Uterus (tissue), 4 donors: ENCODE measurements at regions of chr14 and their contacts with region 1.

Region 1: DNA sequence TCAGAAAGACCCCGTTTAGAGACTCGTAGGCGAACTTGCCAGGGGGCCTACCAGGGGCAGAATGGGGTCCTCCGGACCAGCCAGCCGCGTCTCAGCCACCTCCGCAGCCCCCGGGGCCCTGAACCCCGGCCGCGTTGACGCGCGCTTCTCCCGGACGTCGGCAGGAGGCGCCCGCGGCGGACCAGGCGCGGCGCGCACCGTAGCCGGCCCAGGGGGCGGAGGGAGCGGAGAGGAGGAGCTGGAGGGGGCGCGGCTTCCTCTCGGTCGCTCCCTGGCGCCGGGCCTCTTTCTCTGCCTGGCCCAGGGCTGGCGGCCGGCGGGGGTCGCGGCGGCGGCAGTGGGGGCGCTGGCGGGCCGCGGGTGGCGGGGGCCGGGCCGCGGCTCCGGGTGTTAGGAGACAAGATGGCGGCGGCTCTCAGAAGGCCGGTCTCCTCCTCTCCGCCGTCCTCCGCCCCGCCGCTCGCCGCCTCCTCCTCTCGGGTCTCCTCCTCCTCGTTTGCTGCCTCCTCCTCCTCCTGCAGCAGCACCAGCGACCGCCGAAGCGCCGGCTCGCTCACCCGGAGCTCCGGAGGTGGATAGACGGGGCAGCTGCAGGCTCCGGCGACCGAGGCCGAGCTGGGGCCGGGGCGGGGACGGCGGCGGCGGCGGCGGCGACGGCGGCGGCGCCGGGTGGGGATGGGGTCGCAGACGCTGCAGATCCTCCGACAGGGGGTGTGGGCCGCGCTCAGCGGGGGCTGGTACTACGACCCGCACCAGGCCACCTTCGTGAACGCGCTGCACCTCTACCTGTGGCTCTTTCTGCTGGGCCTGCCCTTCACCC is at the start of gene PCNX1:
- DNase-seq: peak; percentile 88 to 90
- H3K4me3 ChIP-seq: peak within 1 kb of the TSS; percentile 64 to 87
- H3K27ac ChIP-seq: peak within 1 kb of the TSS; percentile 98 to 99
- H3K4me1 ChIP-seq: peaks cover 8 to 11% of the 10 kb centered on the region in 2 donors
- H3K27me3 ChIP-seq: no peaks in the 10 kb centered on the region
- CTCF ChIP-seq: peak; percentile 75 to 96 (median 92)
- POLR2A ChIP-seq: peak; percentile 33 to 55
- total RNA-seq, gene PCNX1: 34.6 to 112 (median 90.3) TPM

Region 2: GRCh38 chr14:70972107-70972976 is 65.0 kb after region 1 on chr14:
- intact Hi-C with region 1: loop called (anchors 2 kb)
- DNase-seq: peak; percentile 82 to 90
- H3K4me3 ChIP-seq: no peak overlapping the region
- H3K27ac ChIP-seq: peak overlapping the region; percentile 39 to 52
- H3K4me1 ChIP-seq: peaks cover 0 to 6% of the 10 kb centered on the region in 2 donors
- H3K27me3 ChIP-seq: no peaks in the 10 kb centered on the region
- CTCF ChIP-seq: peak; percentile 83 to 88 (median 86)
- POLR2A ChIP-seq: no peak